Activated T-helper 1 cell treated with anti-CD3 and anti-CD28 coated beads, Interleukin-12 subunit alpha, Interleukin-12 subunit beta, Interleukin-2, Interleukin-4 antibody, amounts not matched to agents 30 ng/mL and 10 ng/mL and 1 ng/mL, durations not matched to agents 14 hours and 24 hours and 36 hours (primary cell): ENCODE measurements at regions of chr1 and their contacts with region 1.

Region 1: GRCh38 chr1:2525920-2526823 is at the start of gene PANK4:
- DNase-seq: peak; percentile 86
- H3K4me3 Mint-ChIP-seq: peak within 1 kb of the TSS; percentile 94
- H3K27ac Mint-ChIP-seq: peak within 1 kb of the TSS; percentile 98
- H3K4me1 Mint-ChIP-seq: peaks cover 38% of the 10 kb centered on the region
- H3K27me3 Mint-ChIP-seq: peaks cover 15% of the 10 kb centered on the region
- total RNA-seq, gene PANK4: 65.6 and 67.6 TPM in 2 replicates

Region 2: DNA sequence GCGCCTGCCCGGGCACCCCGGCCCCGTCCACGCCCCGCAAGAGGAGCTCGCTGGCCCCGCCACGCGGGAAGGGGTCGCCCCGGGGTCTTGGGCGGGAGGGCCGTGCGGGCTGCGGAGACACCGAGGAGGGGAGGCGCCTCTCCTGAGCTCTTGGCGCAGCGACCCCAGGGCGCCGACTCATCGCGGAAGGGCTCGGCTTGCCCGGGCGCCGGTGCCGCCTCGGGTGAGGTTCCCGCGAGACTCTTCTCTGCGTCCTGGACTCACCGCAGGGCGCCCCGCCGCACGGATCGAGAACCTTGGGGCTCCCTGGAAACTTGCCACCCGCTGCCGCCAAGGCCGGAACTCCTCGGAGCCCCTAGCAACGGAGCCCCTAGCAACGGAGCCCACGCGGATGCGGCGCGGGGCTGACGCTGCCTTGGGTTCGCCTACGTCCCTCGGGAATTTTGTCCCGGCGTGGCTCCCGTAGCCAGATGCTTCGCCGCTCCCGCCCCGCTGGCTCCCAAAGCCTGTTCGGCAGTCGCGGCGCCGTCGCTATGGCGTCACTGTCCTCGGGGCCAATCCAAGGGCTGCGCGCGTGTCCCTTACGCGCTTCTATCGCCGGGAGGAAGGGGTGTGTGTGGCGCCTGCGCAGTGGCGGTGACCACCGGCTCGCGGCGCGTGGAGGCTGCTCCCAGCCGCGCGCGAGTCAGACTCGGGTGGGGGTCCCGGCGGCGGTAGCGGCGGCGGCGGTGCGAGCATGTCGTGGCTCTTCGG is 1014.5 kb before region 1 on chr1 and contains the start of gene ATAD3A:
- intact Hi-C with region 1: no loop called
- DNase-seq: peak; percentile 95
- H3K4me3 Mint-ChIP-seq: peak within 1 kb of the TSS; percentile 97
- H3K27ac Mint-ChIP-seq: peak within 1 kb of the TSS; percentile 92
- H3K4me1 Mint-ChIP-seq: peaks cover 7% of the 10 kb centered on the region
- H3K27me3 Mint-ChIP-seq: no peaks in the 10 kb centered on the region
- total RNA-seq, gene ATAD3A: 108 TPM in 2 replicates

Region 3: DNA sequence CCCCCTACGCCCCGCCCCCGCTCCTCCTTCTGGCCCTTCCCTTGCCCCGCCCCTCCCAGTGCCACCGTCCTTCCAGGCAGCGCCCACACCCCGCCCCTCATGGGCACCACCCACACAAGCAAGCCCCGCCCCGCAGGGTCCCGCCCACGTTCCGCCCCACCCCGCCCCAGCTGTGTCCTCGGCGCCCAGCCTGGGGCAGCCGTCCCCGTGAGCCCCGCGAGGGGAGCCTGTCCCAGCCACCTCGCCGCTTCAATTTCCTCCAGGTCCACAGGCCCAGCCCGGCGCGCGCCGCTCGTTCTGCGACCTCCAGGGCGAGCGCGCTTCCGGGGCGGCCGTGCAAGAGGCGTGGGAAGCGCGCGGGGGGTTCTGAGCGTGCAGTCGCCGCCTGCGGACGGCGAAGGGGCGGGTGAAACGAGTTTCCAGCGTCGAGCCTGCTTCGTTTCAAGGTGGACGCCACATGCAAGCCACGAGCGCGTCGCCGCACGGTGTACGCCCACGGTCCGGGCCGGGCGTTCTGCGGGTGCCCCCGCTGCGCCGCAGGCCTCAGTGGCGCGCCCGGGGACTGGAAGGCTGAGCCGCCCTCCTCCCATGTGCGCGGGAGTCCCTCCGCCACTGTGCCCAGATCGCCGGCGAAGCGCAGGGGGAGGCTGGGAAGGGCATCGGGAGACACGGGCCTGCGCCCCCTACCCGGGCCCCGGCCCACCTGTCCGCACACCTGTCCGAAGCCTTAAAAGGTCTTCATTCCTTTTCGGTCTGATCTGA is 320.8 kb before region 1 on chr1:
- intact Hi-C with region 1: loop called (anchors 2 kb)
- DNase-seq: peak; percentile 85
- H3K4me3 Mint-ChIP-seq: peak overlapping the region; percentile 37
- H3K27ac Mint-ChIP-seq: no peak overlapping the region
- H3K4me1 Mint-ChIP-seq: no peaks in the 10 kb centered on the region
- H3K27me3 Mint-ChIP-seq: no peaks in the 10 kb centered on the region

Region 4: GRCh38 chr1:2290595-2291510 is 235.3 kb before region 1 on chr1:
- intact Hi-C with region 1: loop called (anchors 10 kb)
- DNase-seq: peak; percentile 74
- H3K4me3 Mint-ChIP-seq: peak overlapping the region; percentile 78
- H3K27ac Mint-ChIP-seq: peak overlapping the region; percentile 88
- H3K4me1 Mint-ChIP-seq: peaks cover 61% of the 10 kb centered on the region
- H3K27me3 Mint-ChIP-seq: no peaks in the 10 kb centered on the region

Region 5: DNA sequence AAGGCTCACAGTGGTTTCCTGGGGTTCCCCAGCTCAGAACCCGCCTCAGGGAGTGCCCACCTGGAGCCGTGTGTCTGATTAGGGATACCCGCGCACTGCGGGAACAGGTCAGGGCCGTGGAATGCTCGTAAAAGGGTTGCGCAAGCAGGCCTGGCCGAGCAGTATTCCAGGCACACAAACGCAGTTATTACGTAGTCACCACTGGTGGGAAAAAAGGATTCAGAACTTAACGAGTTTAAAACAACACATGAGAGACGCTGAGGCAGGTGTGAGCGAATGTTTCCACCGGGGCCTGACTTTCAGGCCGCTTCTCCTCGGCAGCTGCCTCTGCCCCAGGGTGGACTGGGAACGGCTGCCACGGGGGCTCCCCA is 31.9 kb before region 1 on chr1:
- intact Hi-C with region 1: no loop called
- DNase-seq: no peak
- H3K4me3 Mint-ChIP-seq: no peak overlapping the region
- H3K27ac Mint-ChIP-seq: no peak overlapping the region
- H3K4me1 Mint-ChIP-seq: no peaks in the 10 kb centered on the region
- H3K27me3 Mint-ChIP-seq: no peaks in the 10 kb centered on the region

Region 6: GRCh38 chr1:2545759-2546514 is 19.8 kb after region 1 on chr1:
- intact Hi-C with region 1: loop called (anchors 1 kb)
- DNase-seq: peak; percentile 87
- H3K4me3 Mint-ChIP-seq: peak overlapping the region; percentile 91
- H3K27ac Mint-ChIP-seq: peak overlapping the region; percentile 61
- H3K4me1 Mint-ChIP-seq: peaks cover 7% of the 10 kb centered on the region
- H3K27me3 Mint-ChIP-seq: peaks cover 13% of the 10 kb centered on the region

Region 7: GRCh38 chr1:2642560-2643413 is 116.6 kb after region 1 on chr1:
- intact Hi-C with region 1: loop called (anchors 1 kb)
- DNase-seq: peak; percentile 93
- H3K4me3 Mint-ChIP-seq: peak overlapping the region; percentile 85
- H3K27ac Mint-ChIP-seq: peak overlapping the region; percentile 93
- H3K4me1 Mint-ChIP-seq: no peaks in the 10 kb centered on the region
- H3K27me3 Mint-ChIP-seq: no peaks in the 10 kb centered on the region